Psoas muscle (tissue), 8 donors: ENCODE measurements at regions of chr14 and their contacts with region 1.

Region 1: DNA sequence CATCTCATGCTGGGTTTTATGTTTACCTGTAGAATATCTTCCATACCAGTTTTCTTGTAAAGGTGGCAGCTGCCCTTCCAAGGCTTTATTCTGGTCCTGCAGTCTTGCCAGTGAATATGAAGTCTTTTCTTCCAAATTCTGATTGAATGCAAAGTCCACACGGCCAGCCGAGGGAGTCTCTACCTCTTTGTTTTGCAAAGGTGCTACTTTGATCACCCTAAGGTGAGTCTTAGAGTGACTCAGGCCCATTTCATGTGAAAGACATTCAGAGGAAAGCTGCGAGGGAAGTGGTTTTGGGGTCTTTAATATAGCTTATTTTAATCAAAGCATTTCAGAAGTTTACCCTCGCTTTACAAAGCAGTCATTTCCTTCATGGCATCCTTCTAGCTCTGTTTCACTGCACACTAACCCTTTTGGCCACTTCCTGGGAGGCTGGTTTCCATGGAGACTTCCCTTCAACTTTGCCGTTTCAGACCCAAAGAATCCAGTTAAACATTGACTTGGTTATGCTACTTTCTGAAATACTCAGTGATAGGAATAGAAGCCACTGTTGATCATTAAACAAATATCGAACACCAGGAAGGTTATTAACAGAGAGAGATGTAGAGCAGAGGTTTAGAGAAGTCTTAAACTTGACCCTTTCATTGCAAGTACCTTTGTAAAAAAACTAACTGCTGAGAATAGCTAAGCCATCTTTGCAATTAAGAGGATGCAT is at the start of gene CCDC198:
- DNase-seq: no peak
- ATAC-seq: no peak
- H3K4me3 ChIP-seq: no peak within 1 kb of the TSS
- H3K27ac ChIP-seq: no peak within 1 kb of the TSS
- H3K4me1 ChIP-seq: no peaks in the 10 kb centered on the region
- H3K27me3 ChIP-seq: no peaks in the 10 kb centered on the region
- CTCF ChIP-seq: no peak
- total RNA-seq, gene CCDC198: not detected

Region 2: GRCh38 chr14:57533214-57533613 is 39.6 kb after region 1 on chr14:
- intact Hi-C with region 1: no loop called
- DNase-seq: no peak
- ATAC-seq: no peak
- H3K4me3 ChIP-seq: no peak overlapping the region
- H3K27ac ChIP-seq: no peak overlapping the region
- H3K4me1 ChIP-seq: no peaks in the 10 kb centered on the region
- H3K27me3 ChIP-seq: no peaks in the 10 kb centered on the region
- CTCF ChIP-seq: peak; percentile 11

Region 3: DNA sequence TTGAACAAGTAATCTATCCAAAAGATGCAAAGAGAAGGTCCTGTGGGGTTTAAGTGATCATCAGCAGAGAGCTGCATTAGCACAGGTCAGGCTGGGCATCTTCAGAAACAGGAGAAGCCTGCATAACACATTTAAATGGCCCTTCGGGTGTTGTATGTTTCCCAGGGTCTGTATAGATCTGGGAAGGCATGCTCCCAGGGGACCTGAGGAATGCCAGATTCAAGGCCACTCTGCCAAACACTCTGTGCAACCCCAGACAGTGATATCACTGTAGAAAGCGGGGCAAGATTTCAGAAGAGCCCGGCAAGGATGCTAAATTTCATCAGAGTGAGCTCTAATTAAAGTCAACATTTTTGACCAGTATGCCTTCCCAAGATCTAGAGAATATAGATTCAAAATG is 565.5 kb after region 1 on chr14:
- intact Hi-C with region 1: loop called in 1 of 2 experiments (anchors 10 kb)
- DNase-seq: no peak
- ATAC-seq: no peak
- H3K4me3 ChIP-seq: no peak overlapping the region
- H3K27ac ChIP-seq: no peak overlapping the region
- H3K4me1 ChIP-seq: no peaks in the 10 kb centered on the region
- H3K27me3 ChIP-seq: no peaks in the 10 kb centered on the region
- CTCF ChIP-seq: no peak